GM23248 (cell line): ENCODE measurements at regions of chr12 and their contacts with region 1.

Region 1: GRCh38 chr12:5988659-5989116 is 43.6 kb upstream of the ANO2 start:
- DNase-seq: peak; percentile 89
- H3K4me3 ChIP-seq: no peak overlapping the region
- H3K27ac ChIP-seq: no peak overlapping the region
- H3K4me1 ChIP-seq: no peaks in the 10 kb centered on the region
- H3K27me3 ChIP-seq: no peaks in the 10 kb centered on the region; the same call in 1 of the 2 replicates

Region 2: DNA sequence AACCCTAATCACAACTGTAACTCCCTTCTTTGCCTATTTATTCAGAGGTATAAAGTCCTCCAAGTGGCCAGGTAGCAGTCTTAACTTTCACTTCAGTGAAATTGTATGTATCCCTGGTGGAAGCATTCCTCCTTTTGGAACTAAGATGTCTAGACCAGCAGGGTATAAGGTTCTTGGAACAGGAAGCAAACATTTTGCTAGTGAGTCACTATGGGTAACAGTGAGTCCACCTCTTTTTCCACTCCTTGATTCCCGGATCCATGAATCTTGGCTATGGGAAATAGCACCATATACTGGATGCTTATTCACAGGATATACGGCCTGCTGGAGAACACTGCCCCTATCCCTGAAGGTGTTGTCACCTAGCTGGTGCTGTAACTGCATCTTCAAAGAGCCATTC is 864.8 kb before region 1 on chr12:
- in situ Hi-C with region 1: no loop called
- DNase-seq: peak; percentile 54
- H3K4me3 ChIP-seq: no peak overlapping the region
- H3K27ac ChIP-seq: no peak overlapping the region
- H3K4me1 ChIP-seq: 0 out of 2 replicates have a peak, but pooled peaks cover 7% of the 10 kb centered on the region
- H3K27me3 ChIP-seq: no peaks in the 10 kb centered on the region

Region 3: GRCh38 chr12:5907807-5908206 is 80.9 kb before region 1 on chr12:
- in situ Hi-C with region 1: no loop called
- DNase-seq: no peak
- H3K4me3 ChIP-seq: no peak overlapping the region
- H3K27ac ChIP-seq: no peak overlapping the region
- H3K4me1 ChIP-seq: no peaks in the 10 kb centered on the region
- H3K27me3 ChIP-seq: 0 out of 2 replicates have a peak, but pooled peaks cover 7% of the 10 kb centered on the region

Region 4: GRCh38 chr12:6039894-6040568 is 51.3 kb after region 1 on chr12:
- in situ Hi-C with region 1: loop called (anchors 10 kb)
- DNase-seq: peak; percentile 82
- H3K4me3 ChIP-seq: no peak overlapping the region
- H3K27ac ChIP-seq: no peak overlapping the region
- H3K4me1 ChIP-seq: peaks cover 8% of the 10 kb centered on the region
- H3K27me3 ChIP-seq: no peaks in the 10 kb centered on the region

Region 5: GRCh38 chr12:6285063-6285477 is 296.4 kb after region 1 on chr12:
- in situ Hi-C with region 1: loop called (anchors 10 kb)
- DNase-seq: peak; percentile 78
- H3K4me3 ChIP-seq: no peak overlapping the region
- H3K27ac ChIP-seq: no peak overlapping the region; the same call in 1 of the 2 replicates
- H3K4me1 ChIP-seq: peaks cover 35% of the 10 kb centered on the region
- H3K27me3 ChIP-seq: no peaks in the 10 kb centered on the region